B cell (primary cell): ENCODE measurements at regions of chr6 and their contacts with region 1.

Region 1: GRCh38 chr6:4155848-4156466 is 20.6 kb upstream of the ECI2 start:
- DNase-seq: peak; percentile 85
- ATAC-seq: peak; percentile 78
- H3K4me3 ChIP-seq: no peak overlapping the region
- H3K4me3 Mint-ChIP-seq: no peak overlapping the region
- H3K27ac ChIP-seq: no peak overlapping the region
- H3K27ac Mint-ChIP-seq: no peak overlapping the region
- H3K4me1 ChIP-seq: peaks cover 4 to 12% of the 10 kb centered on the region in 2 donors
- H3K4me1 Mint-ChIP-seq: peaks cover 31% of the 10 kb centered on the region
- H3K27me3 ChIP-seq: peaks cover 0 to 6% (median 0%) of the 10 kb centered on the region in 4 experiments
- H3K27me3 Mint-ChIP-seq: peaks cover 10% of the 10 kb centered on the region
- CTCF ChIP-seq: peak; percentile 94

Region 2: DNA sequence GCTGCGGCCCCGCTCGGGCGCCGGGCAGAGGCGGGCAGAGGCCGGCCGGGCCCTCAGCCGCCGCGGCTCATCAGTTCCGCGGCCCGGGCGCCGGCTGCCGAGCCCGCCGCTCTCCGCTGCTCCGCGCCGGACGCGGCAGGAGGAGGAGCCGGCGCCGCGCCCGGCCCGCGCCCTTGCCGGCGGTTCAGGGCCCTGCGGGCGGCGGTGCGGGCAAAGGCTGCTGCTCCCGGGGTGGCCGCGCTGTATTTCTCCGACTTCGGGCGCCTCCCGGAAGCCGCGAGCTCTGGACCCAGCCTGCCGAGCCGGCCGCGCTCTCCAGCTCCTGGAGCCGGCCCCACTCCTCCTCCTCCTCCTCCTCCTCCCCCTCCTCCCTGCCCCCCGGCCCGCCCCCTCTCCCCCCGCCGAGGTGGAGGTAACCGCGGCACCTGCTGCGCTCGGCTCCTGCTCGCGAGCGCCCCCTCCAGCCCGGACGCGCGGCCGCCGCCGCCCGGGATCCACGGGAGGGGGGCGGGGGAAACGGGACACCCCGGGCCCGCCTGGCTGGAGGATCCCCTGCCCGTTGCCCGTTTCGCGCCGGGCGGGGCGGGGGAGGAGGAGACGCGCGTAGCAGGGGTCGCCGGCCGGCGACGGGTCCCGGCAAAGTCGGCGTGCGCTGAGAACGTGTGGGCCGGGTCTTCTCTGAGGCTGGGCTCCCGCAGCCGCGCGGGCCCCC is 699.0 kb before region 1 on chr6 and contains the start of gene SLC22A23:
- CTCF ChIA-PET with region 1: no interaction called
- POLR2A ChIA-PET with region 1: no interaction called
- intact Hi-C with region 1: loop called (anchors 10 kb)
- DNase-seq: peak; percentile 81
- ATAC-seq: peak; percentile 80
- H3K4me3 ChIP-seq: peak within 1 kb of the TSS in 4 of 5 experiments; percentile 25 to 51 (median 45)
- H3K4me3 Mint-ChIP-seq: peak within 1 kb of the TSS; percentile 81
- H3K27ac ChIP-seq: no peak within 1 kb of the TSS
- H3K27ac Mint-ChIP-seq: peak within 1 kb of the TSS; percentile 42
- H3K4me1 ChIP-seq: peaks cover 23 to 24% of the 10 kb centered on the region in 2 donors
- H3K4me1 Mint-ChIP-seq: peaks cover 5% of the 10 kb centered on the region
- H3K27me3 ChIP-seq: peaks cover 0 to 58% (median 43%) of the 10 kb centered on the region in 4 experiments
- H3K27me3 Mint-ChIP-seq: peaks cover 38% of the 10 kb centered on the region
- CTCF ChIP-seq: peak; percentile 75
- total RNA-seq, gene SLC22A23: 0.75 and 1.4 TPM in 2 replicates

Region 3: DNA sequence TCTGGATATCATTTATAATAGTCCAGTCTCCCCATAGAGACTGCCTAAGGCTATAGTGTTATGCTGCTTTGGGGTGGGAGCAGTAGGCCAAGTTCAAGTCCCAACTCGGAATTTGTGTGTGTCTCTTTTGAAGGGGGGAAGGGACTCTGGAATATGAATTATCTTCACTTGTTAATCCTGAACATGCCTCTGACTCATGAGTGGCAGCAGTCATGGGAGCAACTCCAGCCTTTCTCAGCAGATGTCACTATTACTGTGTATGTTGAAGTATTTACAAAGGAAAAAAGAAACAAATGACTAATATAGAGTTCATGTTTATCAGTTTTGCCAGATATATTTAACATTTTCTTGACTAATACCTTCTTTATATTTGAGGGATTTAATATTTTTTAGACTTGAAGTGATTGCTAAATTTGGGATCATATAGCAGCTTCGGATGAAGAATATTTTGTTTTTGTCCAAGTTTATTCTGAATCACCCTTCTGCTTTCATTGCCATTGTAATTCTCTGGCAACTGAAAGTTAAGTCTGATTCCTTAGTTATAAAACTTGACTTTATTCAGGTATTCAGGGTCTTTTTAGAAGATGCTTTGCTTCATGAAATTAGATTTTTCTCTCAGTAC is 100.4 kb before region 1 on chr6:
- CTCF ChIA-PET with region 1: interaction called, 58 read pairs
- POLR2A ChIA-PET with region 1: no interaction called
- intact Hi-C with region 1: loop called (anchors 1 kb)
- DNase-seq: no peak
- ATAC-seq: no peak
- H3K4me3 ChIP-seq: no peak overlapping the region
- H3K4me3 Mint-ChIP-seq: no peak overlapping the region
- H3K27ac ChIP-seq: no peak overlapping the region
- H3K27ac Mint-ChIP-seq: no peak overlapping the region
- H3K4me1 ChIP-seq: no peaks in the 10 kb centered on the region
- H3K4me1 Mint-ChIP-seq: no peaks in the 10 kb centered on the region
- H3K27me3 ChIP-seq: no peaks in the 10 kb centered on the region
- H3K27me3 Mint-ChIP-seq: no peaks in the 10 kb centered on the region
- CTCF ChIP-seq: no peak

Region 4: GRCh38 chr6:4066029-4066755 is 89.8 kb before region 1 on chr6:
- CTCF ChIA-PET with region 1: interaction called, 13 read pairs
- POLR2A ChIA-PET with region 1: no interaction called
- intact Hi-C with region 1: no loop called
- DNase-seq: no peak
- ATAC-seq: no peak
- H3K4me3 ChIP-seq: no peak overlapping the region
- H3K4me3 Mint-ChIP-seq: no peak overlapping the region
- H3K27ac ChIP-seq: no peak overlapping the region
- H3K27ac Mint-ChIP-seq: no peak overlapping the region
- H3K4me1 ChIP-seq: no peaks in the 10 kb centered on the region
- H3K4me1 Mint-ChIP-seq: no peaks in the 10 kb centered on the region
- H3K27me3 ChIP-seq: no peaks in the 10 kb centered on the region
- H3K27me3 Mint-ChIP-seq: no peaks in the 10 kb centered on the region
- CTCF ChIP-seq: no peak

Region 5: GRCh38 chr6:4102687-4103244 is 53.2 kb before region 1 on chr6:
- CTCF ChIA-PET with region 1: no interaction called
- POLR2A ChIA-PET with region 1: no interaction called
- intact Hi-C with region 1: no loop called
- DNase-seq: no peak
- ATAC-seq: no peak
- H3K4me3 ChIP-seq: no peak overlapping the region
- H3K4me3 Mint-ChIP-seq: no peak overlapping the region
- H3K27ac ChIP-seq: no peak overlapping the region
- H3K27ac Mint-ChIP-seq: no peak overlapping the region
- H3K4me1 ChIP-seq: no peaks in the 10 kb centered on the region
- H3K4me1 Mint-ChIP-seq: no peaks in the 10 kb centered on the region
- H3K27me3 ChIP-seq: peaks cover 0 to 5% (median 0%) of the 10 kb centered on the region in 4 experiments
- H3K27me3 Mint-ChIP-seq: peaks cover 4% of the 10 kb centered on the region
- CTCF ChIP-seq: no peak

Region 6: DNA sequence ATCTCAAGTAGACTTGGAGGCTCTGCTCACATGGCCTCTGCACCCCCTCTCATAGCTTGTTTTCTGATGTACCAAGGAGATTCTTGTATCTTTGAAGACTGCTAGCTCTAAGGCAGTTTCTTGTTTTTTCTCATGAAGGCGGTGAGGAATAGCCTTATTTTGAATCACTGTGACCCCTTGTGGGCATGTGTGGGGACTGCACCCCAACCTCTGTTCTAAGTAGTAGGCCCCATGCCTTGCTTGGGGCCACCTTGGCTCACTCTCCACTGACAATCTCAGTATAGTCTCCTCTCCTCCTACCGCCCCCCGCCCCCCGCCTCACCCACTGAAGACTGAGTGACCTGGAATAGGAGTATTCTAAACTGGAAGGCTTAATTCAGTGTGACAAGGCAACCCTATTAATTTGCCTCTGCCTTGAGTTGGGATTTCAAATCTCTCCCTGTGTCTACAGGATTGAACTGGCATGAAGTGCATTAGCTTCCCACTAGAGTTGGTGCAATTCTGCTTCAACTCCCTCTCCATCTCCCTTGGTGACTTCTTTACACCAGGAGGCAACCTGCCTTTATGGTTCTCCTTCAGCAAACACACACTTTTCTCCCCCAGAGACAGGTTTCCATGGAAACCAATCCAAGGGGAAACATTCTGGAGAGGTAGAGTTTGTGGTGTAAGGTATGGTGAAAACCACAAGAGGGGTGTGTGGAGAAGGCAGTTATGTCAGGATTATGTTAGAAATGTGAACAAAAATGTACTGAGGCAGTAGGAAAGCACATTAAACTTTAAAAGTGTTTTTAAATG is 54.9 kb after region 1 on chr6:
- CTCF ChIA-PET with region 1: interaction called, 8 read pairs
- POLR2A ChIA-PET with region 1: no interaction called
- intact Hi-C with region 1: loop called (anchors 2 kb)
- DNase-seq: peak; percentile 72
- ATAC-seq: peak; percentile 94
- H3K4me3 ChIP-seq: no peak overlapping the region
- H3K4me3 Mint-ChIP-seq: peak overlapping the region; percentile 65
- H3K27ac ChIP-seq: peak overlapping the region in 1 of 2 donors; percentile 0
- H3K27ac Mint-ChIP-seq: peak overlapping the region; percentile 86
- H3K4me1 ChIP-seq: peaks cover 28 to 34% of the 10 kb centered on the region in 2 donors
- H3K4me1 Mint-ChIP-seq: peaks cover 35% of the 10 kb centered on the region
- H3K27me3 ChIP-seq: peaks cover 0 to under 1% (median under 1%) of the 10 kb centered on the region in 4 experiments
- H3K27me3 Mint-ChIP-seq: peaks cover 3% of the 10 kb centered on the region
- CTCF ChIP-seq: peak; percentile 83

Region 7: GRCh38 chr6:4957521-4958231 is 801.7 kb after region 1 on chr6:
- CTCF ChIA-PET with region 1: no interaction called
- POLR2A ChIA-PET with region 1: no interaction called
- intact Hi-C with region 1: no loop called
- DNase-seq: no peak
- ATAC-seq: no peak
- H3K4me3 ChIP-seq: no peak overlapping the region
- H3K4me3 Mint-ChIP-seq: no peak overlapping the region
- H3K27ac ChIP-seq: no peak overlapping the region
- H3K27ac Mint-ChIP-seq: no peak overlapping the region
- H3K4me1 ChIP-seq: no peaks in the 10 kb centered on the region
- H3K4me1 Mint-ChIP-seq: no peaks in the 10 kb centered on the region
- H3K27me3 ChIP-seq: no peaks in the 10 kb centered on the region
- H3K27me3 Mint-ChIP-seq: no peaks in the 10 kb centered on the region
- CTCF ChIP-seq: no peak